Activated CD4-positive, alpha-beta T cell treated with anti-CD3 and anti-CD28 coated beads for 36 hours (primary cell): ENCODE measurements at regions of chr4 and their contacts with region 1.

Region 1: DNA sequence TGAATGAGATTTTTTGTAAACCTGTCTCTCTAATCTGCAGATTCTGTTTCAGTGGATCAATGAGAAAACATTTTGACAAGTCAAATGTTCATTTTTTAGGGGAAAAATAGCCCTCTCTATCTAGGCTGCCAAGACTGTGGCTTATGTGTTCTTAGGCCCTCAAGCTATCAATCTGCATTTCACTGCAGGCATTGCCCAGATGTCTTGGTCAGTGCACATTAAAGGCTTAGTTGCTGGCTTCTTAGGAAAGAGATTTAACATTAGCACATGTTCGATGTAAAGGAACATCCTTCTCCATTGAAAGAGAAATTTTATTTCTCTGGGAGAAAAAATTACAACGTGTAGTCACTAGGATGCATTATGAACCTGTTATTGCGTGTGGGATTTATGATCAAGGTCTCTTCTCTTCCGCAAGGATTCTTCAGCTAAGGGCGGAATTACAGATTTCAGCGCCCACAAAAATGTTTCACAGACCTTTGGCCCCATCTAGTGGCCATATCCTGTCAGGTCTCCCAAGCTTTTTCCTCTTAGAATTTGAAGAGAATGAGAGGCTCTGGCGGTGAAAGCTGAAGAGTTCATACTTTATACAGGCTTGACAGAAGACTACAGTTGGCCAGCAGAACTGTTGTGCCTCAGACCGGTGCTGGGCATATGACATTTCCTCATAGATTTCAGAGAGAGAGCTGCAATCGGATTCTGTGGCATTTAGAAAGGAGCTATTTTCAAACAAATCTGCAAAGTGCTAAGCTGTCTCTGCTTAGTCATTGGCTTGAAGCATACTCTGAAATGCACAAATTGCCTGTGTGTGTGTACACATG is 144.6 kb upstream of the NOCT start:
- DNase-seq: peak; percentile 66
- ATAC-seq: peak; percentile 36
- H3K4me3 Mint-ChIP-seq: no peak overlapping the region
- H3K27ac Mint-ChIP-seq: no peak overlapping the region
- H3K4me1 Mint-ChIP-seq: no peaks in the 10 kb centered on the region
- H3K27me3 Mint-ChIP-seq: peaks cover 27% of the 10 kb centered on the region

Region 2: GRCh38 chr4:138035781-138036258 is 835.1 kb before region 1 on chr4:
- CTCF ChIA-PET with region 1: interaction called, 3 read pairs
- POLR2A ChIA-PET with region 1: no interaction called
- intact Hi-C with region 1: loop called in 1 of 2 experiments (anchors 2 kb)
- DNase-seq: peak; percentile 5
- ATAC-seq: peak; percentile 47
- H3K4me3 Mint-ChIP-seq: no peak overlapping the region
- H3K27ac Mint-ChIP-seq: no peak overlapping the region
- H3K4me1 Mint-ChIP-seq: no peaks in the 10 kb centered on the region
- H3K27me3 Mint-ChIP-seq: no peaks in the 10 kb centered on the region

Region 3: DNA sequence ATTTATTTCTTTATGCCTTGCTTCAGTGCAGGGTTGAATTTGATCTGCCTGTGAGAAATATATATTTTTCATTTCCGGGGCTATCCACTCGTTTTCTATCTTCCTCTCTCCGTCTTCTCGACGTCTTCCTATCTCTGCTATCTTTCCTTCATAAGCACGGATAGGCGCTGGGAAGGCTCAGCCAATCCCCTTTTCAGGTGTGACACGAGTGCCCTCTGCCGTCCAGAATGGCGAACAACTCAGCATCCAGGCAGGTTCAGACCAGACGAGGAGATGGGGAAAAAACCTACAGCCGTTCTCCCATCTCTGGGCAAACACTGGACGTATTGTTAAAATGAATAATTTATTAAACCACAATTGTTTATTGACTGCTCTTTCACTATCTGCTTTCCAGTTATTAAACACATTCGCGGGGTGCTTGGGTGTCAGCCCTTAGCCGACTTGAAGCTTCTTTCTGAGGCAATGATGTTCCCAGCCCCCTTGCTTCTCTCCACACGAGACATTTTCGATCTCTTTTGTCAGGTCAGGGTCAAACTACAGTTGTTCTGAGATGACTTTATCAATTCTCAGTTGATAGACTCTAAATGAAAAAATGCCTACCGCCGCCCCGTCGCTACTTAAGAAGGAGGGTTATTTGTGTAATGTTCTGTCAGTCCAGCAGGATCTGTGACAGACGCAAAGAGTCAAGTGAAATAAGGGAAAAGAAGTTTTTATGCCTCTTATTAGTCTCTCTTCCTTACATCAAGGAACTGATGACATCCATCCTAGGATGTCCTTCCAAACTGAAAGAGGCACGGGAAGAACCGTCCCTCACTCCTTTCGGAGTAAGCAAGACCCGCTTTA is 48.4 kb after region 1 on chr4:
- CTCF ChIA-PET with region 1: interaction called, 5 read pairs
- POLR2A ChIA-PET with region 1: no interaction called
- intact Hi-C with region 1: loop called in 1 of 2 experiments (anchors 2 kb)
- DNase-seq: peak; percentile 74
- ATAC-seq: peak; percentile 73
- H3K4me3 Mint-ChIP-seq: no peak overlapping the region
- H3K27ac Mint-ChIP-seq: no peak overlapping the region
- H3K4me1 Mint-ChIP-seq: peaks cover 2% of the 10 kb centered on the region
- H3K27me3 Mint-ChIP-seq: peaks cover 12% of the 10 kb centered on the region

Region 4: GRCh38 chr4:138938366-138938690 is 67.4 kb after region 1 on chr4:
- CTCF ChIA-PET with region 1: interaction called, 10 read pairs
- POLR2A ChIA-PET with region 1: no interaction called
- intact Hi-C with region 1: no loop called
- DNase-seq: no peak
- ATAC-seq: peak; percentile 42
- H3K4me3 Mint-ChIP-seq: no peak overlapping the region
- H3K27ac Mint-ChIP-seq: no peak overlapping the region
- H3K4me1 Mint-ChIP-seq: no peaks in the 10 kb centered on the region
- H3K27me3 Mint-ChIP-seq: peaks cover 4% of the 10 kb centered on the region

Region 5: GRCh38 chr4:139167774-139168444 is 297.0 kb after region 1 on chr4:
- CTCF ChIA-PET with region 1: no interaction called
- POLR2A ChIA-PET with region 1: no interaction called
- intact Hi-C with region 1: no loop called
- DNase-seq: no peak
- ATAC-seq: no peak
- H3K4me3 Mint-ChIP-seq: no peak overlapping the region
- H3K27ac Mint-ChIP-seq: no peak overlapping the region
- H3K4me1 Mint-ChIP-seq: peaks cover 10% of the 10 kb centered on the region
- H3K27me3 Mint-ChIP-seq: no peaks in the 10 kb centered on the region